ENCODE measurements at regions of chr1 and their contacts with region 1.

Region 1: GRCh38 chr1:47527658-47528255 is 89.9 kb downstream of the FOXD2 start:
- DNase-seq: peak in 1 of 2 experiments; percentile 79
- H3K4me3 ChIP-seq: no peak overlapping the region
- H3K27ac ChIP-seq: no peak overlapping the region
- H3K4me1 ChIP-seq: peaks cover 4 to 19% (median 6%) of the 10 kb centered on the region in 4 experiments; a peak in 6 of 7 replicates
- H3K27me3 ChIP-seq: peaks cover 0 to 2% (median 0%) of the 10 kb centered on the region in 4 experiments; a peak in 2 of 7 replicates
- CTCF ChIP-seq: peak; percentile 79 to 89 (median 87)
- EP300 ChIP-seq: no peak
- POLR2A ChIP-seq: no peak
- RAD21 ChIP-seq: peak; percentile 90 to 92

Region 2: DNA sequence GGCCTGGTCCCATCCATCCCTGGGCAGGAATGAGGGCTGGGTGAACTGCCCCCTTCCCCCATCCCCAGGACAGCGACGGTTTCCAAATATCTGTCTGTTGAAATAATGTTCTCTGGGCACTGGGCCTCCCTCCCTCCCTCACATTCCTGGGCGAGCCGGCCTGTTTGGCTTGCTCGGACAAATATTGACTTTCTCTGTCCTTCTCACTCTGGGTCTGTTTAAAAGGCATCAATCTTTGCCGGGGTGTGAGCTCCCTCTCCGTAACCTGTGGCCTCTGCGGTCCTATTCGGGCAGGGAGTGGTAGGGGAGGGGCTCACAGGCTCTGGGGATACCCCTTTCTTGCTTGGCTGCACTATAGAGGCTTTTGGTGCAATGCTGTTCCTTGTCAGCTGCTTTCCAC is 49.7 kb before region 1 on chr1:
- CTCF ChIA-PET with region 1: interaction called, 12 read pairs
- POLR2A ChIA-PET with region 1: no interaction called
- DNase-seq: no peak
- H3K4me3 ChIP-seq: no peak overlapping the region
- H3K27ac ChIP-seq: no peak overlapping the region
- H3K4me1 ChIP-seq: 0 out of 7 replicates have a peak, but pooled peaks cover 0 to 2% (median 0%) of the 10 kb centered on the region in 4 experiments
- H3K27me3 ChIP-seq: peaks cover 0 to 2% (median 0%) of the 10 kb centered on the region in 4 experiments; a peak in 2 of 7 replicates
- CTCF ChIP-seq: no peak
- EP300 ChIP-seq: no peak
- POLR2A ChIP-seq: no peak
- RAD21 ChIP-seq: no peak

Region 3: DNA sequence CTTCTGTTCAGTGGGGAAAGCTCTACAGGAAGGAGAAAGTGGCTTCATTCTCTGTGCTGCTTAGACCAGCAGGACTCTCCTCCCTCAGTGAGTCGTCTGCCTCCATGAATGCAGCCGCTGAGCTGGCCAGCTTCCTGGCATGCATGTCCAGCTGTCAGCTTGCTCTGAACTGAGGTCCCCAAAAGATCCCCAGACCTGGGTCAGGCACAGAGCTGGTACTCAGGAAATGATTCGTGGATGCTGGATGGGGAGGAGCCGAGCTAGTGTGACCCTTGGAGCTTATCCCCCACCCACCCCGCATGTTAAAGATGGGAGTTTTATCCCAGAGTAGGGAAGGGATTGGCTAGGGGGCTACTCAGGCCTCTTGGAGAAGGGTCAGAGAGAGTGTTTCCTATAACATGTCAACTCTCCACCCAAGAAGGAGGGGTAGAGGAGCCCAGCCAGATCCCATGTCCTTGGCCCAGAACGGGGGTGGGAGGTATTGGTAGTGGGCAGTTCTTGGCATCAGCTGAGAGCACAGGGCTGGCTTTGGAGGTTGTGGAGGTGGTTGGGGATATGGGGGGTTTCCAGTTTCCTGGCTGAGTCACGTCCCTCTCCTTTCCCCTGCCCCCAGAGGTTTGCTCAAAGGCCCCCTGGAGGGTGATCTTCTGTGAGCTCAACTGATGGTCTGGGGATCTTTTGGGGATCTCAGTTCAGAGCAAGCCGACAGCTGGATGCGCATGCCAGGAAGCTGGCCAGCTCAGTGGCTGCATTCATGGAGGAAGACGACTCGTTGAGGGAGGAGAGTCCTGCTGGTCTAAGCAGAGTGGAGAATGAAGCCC is 20.2 kb after region 1 on chr1:
- CTCF ChIA-PET with region 1: interaction called, 43 read pairs
- POLR2A ChIA-PET with region 1: interaction called, 3 read pairs
- DNase-seq: no peak
- H3K4me3 ChIP-seq: no peak overlapping the region
- H3K27ac ChIP-seq: no peak overlapping the region
- H3K4me1 ChIP-seq: peaks cover 0 to 11% (median 5%) of the 10 kb centered on the region in 4 experiments; a peak in 6 of 7 replicates
- H3K27me3 ChIP-seq: peaks cover 0 to 2% (median 0%) of the 10 kb centered on the region in 4 experiments; a peak in 3 of 7 replicates
- CTCF ChIP-seq: no peak
- EP300 ChIP-seq: no peak
- POLR2A ChIP-seq: no peak
- RAD21 ChIP-seq: no peak

Region 4: GRCh38 chr1:47598357-47598756 is 70.6 kb after region 1 on chr1:
- CTCF ChIA-PET with region 1: interaction called, 10 read pairs
- POLR2A ChIA-PET with region 1: no interaction called
- DNase-seq: no peak
- H3K4me3 ChIP-seq: no peak overlapping the region
- H3K27ac ChIP-seq: no peak overlapping the region
- H3K4me1 ChIP-seq: peaks cover 0 to 3% (median 0%) of the 10 kb centered on the region in 4 experiments; a peak in 1 of 7 replicates
- H3K27me3 ChIP-seq: peaks cover 9 to 14% (median 12%) of the 10 kb centered on the region in 4 experiments
- CTCF ChIP-seq: no peak
- EP300 ChIP-seq: no peak
- POLR2A ChIP-seq: no peak
- RAD21 ChIP-seq: no peak

Region 5: DNA sequence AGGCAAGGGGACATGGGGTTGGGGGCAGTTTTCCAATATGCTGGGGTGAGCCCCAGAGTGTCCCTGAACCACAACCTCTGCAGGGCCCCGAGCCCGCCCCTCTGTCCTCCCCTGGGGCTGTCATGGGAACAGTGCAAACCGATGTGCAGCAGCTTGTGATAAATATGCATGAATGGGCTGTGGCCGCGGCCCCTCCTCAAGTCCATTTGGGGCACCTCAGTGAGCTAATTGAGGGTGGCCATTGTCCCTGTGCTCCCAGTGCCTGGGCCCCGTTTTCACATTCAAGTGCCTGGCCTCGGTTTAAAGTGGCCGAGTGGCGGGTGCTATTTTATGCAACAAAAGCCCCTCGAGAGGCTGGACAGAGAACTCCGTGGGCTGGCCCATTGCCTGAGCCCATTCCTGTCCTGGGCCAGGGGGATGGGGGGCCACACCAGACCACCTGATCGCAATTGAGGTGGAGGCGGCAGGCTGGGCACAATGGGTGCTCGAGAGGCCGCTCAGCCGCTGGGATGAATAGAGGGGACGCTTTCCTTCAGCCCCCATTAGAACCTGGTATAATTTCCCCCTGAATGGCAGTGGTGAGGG is 103.7 kb after region 1 on chr1:
- CTCF ChIA-PET with region 1: interaction called, 151 read pairs
- POLR2A ChIA-PET with region 1: no interaction called
- DNase-seq: no peak
- H3K4me3 ChIP-seq: no peak overlapping the region
- H3K27ac ChIP-seq: no peak overlapping the region
- H3K4me1 ChIP-seq: peaks cover 0 to 3% (median 0%) of the 10 kb centered on the region in 4 experiments; a peak in 2 of 7 replicates
- H3K27me3 ChIP-seq: no peaks in the 10 kb centered on the region
- CTCF ChIP-seq: no peak
- EP300 ChIP-seq: no peak
- POLR2A ChIP-seq: no peak
- RAD21 ChIP-seq: no peak

Region 6: GRCh38 chr1:47725992-47726855 is 198.5 kb after region 1 on chr1:
- CTCF ChIA-PET with region 1: interaction called, 46 read pairs
- POLR2A ChIA-PET with region 1: no interaction called
- DNase-seq: peak in 1 of 2 experiments; percentile 84
- H3K4me3 ChIP-seq: peak overlapping the region in 1 of 4 experiments; percentile 55; a peak in 2 of 8 replicates
- H3K27ac ChIP-seq: no peak overlapping the region
- H3K4me1 ChIP-seq: peaks cover 0 to 14% (median 9%) of the 10 kb centered on the region in 4 experiments; a peak in 6 of 7 replicates
- H3K27me3 ChIP-seq: peaks cover 14 to 37% (median 31%) of the 10 kb centered on the region in 4 experiments
- CTCF ChIP-seq: peak; percentile 89 to 98 (median 97)
- EP300 ChIP-seq: no peak
- POLR2A ChIP-seq: no peak
- RAD21 ChIP-seq: peak; percentile 88